Adrenal gland (tissue), 19 donors: ENCODE measurements at regions of chr7 and their contacts with region 1.

Region 1: GRCh38 chr7:94374231-94374630 is 20.5 kb upstream of the COL1A2 start:
- DNase-seq: peak in 6 of 7 donors; percentile 48 to 76 (median 60)
- H3K4me3 ChIP-seq: no peak overlapping the region
- H3K27ac ChIP-seq: peak overlapping the region in 3 of 5 donors; percentile 15 to 71 (median 65)
- H3K4me1 ChIP-seq: no peaks in the 10 kb centered on the region
- H3K27me3 ChIP-seq: no peaks in the 10 kb centered on the region
- CTCF ChIP-seq: no peak
- POLR2A ChIP-seq: no peak

Region 2: DNA sequence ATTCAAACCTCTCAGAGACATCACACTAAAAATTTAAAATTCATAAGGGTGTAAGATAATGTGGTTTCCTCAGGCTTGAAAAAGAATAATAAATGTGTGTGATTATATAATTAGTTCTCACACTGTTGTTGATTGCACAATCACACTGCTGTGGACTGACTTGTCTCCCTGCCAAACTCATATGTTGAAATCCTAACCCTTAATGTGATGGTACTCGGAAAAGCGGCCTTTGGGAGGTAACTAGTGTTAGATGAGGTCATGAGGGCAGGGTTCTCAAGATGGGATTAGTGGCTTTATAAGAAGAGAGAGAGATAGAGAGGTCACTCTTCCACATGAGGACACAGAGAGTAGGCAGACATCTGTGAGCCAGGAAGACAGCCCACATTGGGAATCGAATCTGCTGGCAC is 108.0 kb before region 1 on chr7:
- intact Hi-C with region 1: no loop called
- DNase-seq: peak in 3 of 7 donors; percentile 15 to 34 (median 28)
- H3K4me3 ChIP-seq: no peak overlapping the region
- H3K27ac ChIP-seq: peak overlapping the region in 1 of 5 donors; percentile 47
- H3K4me1 ChIP-seq: peaks cover 0 to 18% of the 10 kb centered on the region in 2 donors
- H3K27me3 ChIP-seq: no peaks in the 10 kb centered on the region
- CTCF ChIP-seq: no peak
- POLR2A ChIP-seq: no peak

Region 3: GRCh38 chr7:94313926-94314325 is 60.3 kb before region 1 on chr7:
- intact Hi-C with region 1: loop called in 1 of 2 experiments (anchors 10 kb)
- DNase-seq: no peak
- H3K4me3 ChIP-seq: no peak overlapping the region
- H3K27ac ChIP-seq: no peak overlapping the region
- H3K4me1 ChIP-seq: no peaks in the 10 kb centered on the region
- H3K27me3 ChIP-seq: no peaks in the 10 kb centered on the region
- CTCF ChIP-seq: no peak
- POLR2A ChIP-seq: no peak

Region 4: GRCh38 chr7:94389381-94389780 is 15.2 kb after region 1 on chr7:
- intact Hi-C with region 1: loop called in 1 of 2 experiments (anchors 2 kb)
- DNase-seq: no peak
- H3K4me3 ChIP-seq: no peak overlapping the region
- H3K27ac ChIP-seq: no peak overlapping the region
- H3K4me1 ChIP-seq: peaks cover 5 to 11% of the 10 kb centered on the region in 2 donors
- H3K27me3 ChIP-seq: no peaks in the 10 kb centered on the region
- CTCF ChIP-seq: no peak
- POLR2A ChIP-seq: no peak

Region 5: DNA sequence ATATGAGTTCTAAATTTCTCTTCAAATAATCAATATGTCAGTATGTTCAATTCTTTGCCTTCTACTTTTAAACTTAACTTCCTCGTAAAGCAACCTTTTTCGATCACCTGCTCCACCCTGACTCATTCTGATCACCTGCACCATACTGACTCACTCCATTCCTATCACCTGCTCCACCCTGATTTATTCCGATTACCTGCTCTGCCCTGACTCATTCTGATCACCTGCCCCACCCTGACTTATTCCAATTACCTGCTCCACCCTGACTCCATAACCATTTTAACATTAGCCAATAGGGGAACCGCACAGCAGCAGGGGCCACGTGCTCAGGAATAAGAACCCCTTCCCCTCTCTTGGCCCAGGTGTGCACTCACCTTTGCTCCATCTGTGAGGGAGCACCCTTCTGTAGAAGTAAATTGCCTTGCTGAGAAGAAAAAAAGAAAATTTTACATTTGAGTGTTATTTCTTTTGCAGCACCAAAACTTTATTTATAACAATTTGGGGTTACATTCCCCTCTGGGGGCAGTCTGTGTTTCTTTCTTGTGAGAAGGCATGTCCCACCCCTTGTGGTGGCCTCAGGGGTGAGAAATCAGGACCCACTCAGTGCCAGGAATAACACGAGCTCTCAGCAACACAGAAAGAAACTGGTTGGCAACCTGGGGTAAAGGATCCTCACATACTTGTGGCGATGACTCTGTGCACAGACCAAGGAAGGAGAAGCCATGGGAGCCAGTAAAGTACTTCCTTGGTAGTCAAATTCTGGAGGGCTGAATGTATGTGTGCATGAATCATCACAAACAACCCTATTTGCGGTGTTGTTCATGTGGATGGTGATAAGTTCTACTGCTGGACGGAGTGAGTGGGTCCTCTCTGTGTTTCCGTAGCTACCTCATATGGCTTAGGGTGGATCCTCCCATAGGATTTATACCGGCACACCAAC is 503.8 kb after region 1 on chr7:
- intact Hi-C with region 1: no loop called
- DNase-seq: no peak
- H3K4me3 ChIP-seq: no peak overlapping the region
- H3K27ac ChIP-seq: no peak overlapping the region
- H3K4me1 ChIP-seq: no peaks in the 10 kb centered on the region
- H3K27me3 ChIP-seq: no peaks in the 10 kb centered on the region
- CTCF ChIP-seq: no peak
- POLR2A ChIP-seq: no peak